ENCODE measurements at regions of chr6 and their contacts with region 1.

Region 1: DNA sequence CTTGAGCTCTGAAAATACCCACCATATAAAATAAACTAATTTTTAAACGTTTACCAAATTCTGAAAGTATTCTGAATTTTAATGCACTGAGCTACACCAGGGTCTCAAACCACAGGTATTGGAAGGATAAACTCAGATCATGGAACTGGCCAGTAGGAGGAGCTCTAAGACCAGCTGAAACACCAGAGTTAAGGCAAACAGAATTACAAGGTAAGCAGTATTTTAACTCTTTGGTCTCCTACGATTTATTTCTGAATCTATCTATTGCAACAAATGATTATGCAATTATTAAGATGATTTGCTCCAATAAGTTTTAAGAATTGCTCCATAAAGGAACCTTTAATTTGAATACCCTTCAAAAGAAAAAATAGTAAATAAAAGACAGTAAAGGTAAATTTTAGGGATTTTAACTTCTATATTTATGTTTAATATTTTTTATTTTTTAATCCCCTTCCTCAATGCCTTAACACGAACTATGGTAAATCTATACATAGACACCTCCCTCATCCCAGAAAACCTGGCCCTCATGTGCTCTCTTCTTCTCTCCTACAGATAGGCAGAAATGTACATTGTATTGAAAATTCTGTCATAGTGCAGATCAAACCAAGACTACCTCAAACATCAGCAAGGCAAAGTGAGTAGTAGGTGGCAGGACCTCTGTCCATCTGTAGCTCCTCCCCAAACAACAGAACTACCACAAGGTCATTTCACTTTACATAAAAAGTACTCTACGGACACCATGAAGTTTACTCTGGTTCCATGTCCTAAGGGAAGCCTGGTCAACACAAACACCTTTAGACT is 58.4 kb downstream of the SMLR1 start:
- DNase-seq: peak; percentile 85
- H3K4me3 Mint-ChIP-seq: no peak overlapping the region
- H3K27ac Mint-ChIP-seq: no peak overlapping the region
- H3K4me1 Mint-ChIP-seq: no peaks in the 10 kb centered on the region
- H3K27me3 Mint-ChIP-seq: no peaks in the 10 kb centered on the region
- CTCF ChIP-seq: peak; percentile 85

Region 2: DNA sequence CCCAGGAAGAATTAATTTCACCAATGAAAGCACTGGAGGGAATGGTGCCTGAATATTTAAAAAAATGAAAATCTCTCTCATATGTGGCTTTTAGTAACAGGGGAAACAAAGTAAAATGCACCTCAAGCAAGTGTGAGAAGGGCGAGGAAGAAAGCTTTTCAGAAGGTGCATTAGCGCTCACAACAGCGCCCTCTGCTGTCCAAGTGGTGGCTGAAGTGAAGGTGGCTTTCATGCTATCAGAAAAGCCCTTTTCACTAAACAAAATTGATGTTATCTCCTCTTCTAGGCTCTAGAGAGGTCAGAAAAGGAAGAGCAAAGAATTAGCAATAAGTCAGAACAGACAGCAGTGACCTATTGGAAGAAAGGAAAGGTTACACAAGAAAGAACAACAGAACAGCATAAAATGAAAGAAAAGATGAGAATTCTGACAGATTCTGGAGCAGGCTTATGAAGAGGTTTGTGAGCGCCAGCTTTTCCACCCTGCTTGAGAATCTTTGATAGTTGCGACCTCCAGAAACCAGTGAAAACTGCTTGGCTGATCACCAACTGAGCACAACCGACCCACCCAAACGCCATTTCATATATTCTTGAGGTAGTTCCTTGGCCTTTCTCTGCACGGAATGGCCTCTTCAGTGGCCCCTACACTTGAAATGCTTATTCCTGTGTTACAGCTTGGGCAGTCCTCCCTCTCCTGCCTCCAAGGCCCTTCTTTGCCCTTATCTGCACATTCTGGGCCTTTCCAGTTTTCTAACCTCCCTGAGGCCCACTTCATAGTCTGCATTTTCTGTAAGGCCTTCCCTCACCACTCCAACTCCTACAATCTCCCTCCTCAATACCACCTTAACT is 13.1 kb before region 1 on chr6:
- CTCF ChIA-PET with region 1: interaction called, 36 read pairs
- POLR2A ChIA-PET with region 1: no interaction called
- intact Hi-C with region 1: no loop called
- DNase-seq: peak; percentile 71
- H3K4me3 Mint-ChIP-seq: no peak overlapping the region
- H3K27ac Mint-ChIP-seq: no peak overlapping the region
- H3K4me1 Mint-ChIP-seq: no peaks in the 10 kb centered on the region
- H3K27me3 Mint-ChIP-seq: no peaks in the 10 kb centered on the region
- CTCF ChIP-seq: peak; percentile 85

Region 3: DNA sequence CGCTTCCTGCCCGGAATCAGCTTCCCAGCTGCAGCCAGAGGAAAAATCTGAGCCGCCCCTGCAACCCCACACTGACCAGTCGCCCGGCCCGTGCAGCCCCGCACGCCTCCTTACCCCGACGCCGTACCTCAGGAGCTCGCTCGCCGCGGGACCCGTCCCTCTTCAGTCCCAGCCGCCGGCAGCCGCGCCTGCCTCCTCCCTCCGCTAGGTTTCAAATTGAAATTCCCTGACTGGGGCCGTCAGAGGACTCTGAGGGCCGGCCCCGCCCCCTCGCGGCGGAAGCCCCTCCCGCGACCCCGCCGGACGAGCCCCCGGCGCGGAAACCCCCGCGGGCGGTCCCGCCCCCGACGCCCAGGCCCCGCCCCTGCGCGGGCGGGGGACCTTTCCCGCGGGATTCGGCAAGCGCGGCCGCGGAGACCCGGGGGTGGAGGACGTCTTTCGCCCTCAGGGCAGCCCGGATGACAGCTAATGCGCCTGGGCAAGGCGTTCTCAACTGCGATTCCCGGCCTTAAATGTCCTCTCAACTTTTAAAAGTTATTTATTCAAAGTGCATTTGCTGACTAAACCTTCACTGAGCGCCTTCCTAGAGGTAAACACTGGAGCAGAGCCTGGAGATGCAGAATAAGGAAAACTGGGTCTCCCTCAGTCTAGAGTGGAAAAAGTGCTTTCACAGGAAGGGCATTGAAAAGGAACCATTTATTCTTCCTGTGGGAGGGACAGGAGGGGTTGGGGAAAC is 177.6 kb after region 1 on chr6 and contains the start of gene EPB41L2:
- CTCF ChIA-PET with region 1: interaction called, 9 read pairs
- POLR2A ChIA-PET with region 1: no interaction called
- intact Hi-C with region 1: loop called (anchors 5 kb)
- DNase-seq: peak; percentile 80
- H3K4me3 Mint-ChIP-seq: peak within 1 kb of the TSS; percentile 84
- H3K27ac Mint-ChIP-seq: peak within 1 kb of the TSS; percentile 69
- H3K4me1 Mint-ChIP-seq: peaks cover 17% of the 10 kb centered on the region
- H3K27me3 Mint-ChIP-seq: no peaks in the 10 kb centered on the region
- CTCF ChIP-seq: no peak
- total RNA-seq, gene EPB41L2: 22.5 and 33.3 TPM in 2 replicates

Region 4: DNA sequence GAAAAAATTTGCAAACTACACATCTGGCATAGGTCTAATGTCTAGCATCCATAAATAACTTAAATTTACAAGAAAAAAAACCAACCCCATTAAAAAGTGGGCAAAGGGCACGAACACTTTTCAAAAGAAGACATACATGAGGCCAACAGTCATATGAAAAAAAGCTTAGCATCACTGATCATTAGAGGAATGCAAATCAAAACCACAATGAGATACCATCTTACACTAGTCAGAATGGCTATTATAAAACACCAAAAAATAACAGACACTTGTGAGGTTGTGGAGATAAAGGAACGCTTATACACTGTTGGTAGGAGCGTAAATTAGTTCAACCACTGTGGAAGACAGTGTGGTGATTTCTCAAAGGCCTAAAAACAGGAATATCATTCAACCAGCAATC is 211.2 kb after region 1 on chr6:
- CTCF ChIA-PET with region 1: no interaction called
- POLR2A ChIA-PET with region 1: no interaction called
- intact Hi-C with region 1: no loop called
- DNase-seq: no peak
- H3K4me3 Mint-ChIP-seq: no peak overlapping the region
- H3K27ac Mint-ChIP-seq: no peak overlapping the region
- H3K4me1 Mint-ChIP-seq: no peaks in the 10 kb centered on the region
- H3K27me3 Mint-ChIP-seq: no peaks in the 10 kb centered on the region
- CTCF ChIP-seq: no peak

Region 5: GRCh38 chr6:131116749-131117360 is 231.3 kb after region 1 on chr6:
- CTCF ChIA-PET with region 1: interaction called, 200 read pairs
- POLR2A ChIA-PET with region 1: interaction called, 7 read pairs
- intact Hi-C with region 1: loop called (anchors 1 kb)
- DNase-seq: peak; percentile 69
- H3K4me3 Mint-ChIP-seq: no peak overlapping the region
- H3K27ac Mint-ChIP-seq: no peak overlapping the region
- H3K4me1 Mint-ChIP-seq: peaks cover 5% of the 10 kb centered on the region
- H3K27me3 Mint-ChIP-seq: no peaks in the 10 kb centered on the region
- CTCF ChIP-seq: peak; percentile 51

Region 6: GRCh38 chr6:131167773-131168172 is 282.2 kb after region 1 on chr6:
- CTCF ChIA-PET with region 1: interaction called, 16 read pairs
- POLR2A ChIA-PET with region 1: no interaction called
- intact Hi-C with region 1: loop called (anchors 5 kb)
- DNase-seq: no peak
- H3K4me3 Mint-ChIP-seq: no peak overlapping the region
- H3K27ac Mint-ChIP-seq: no peak overlapping the region
- H3K4me1 Mint-ChIP-seq: peaks cover 7% of the 10 kb centered on the region
- H3K27me3 Mint-ChIP-seq: no peaks in the 10 kb centered on the region
- CTCF ChIP-seq: no peak